ENCODE measurements at regions of chr20 and their contacts with region 1.

Region 1: GRCh38 chr20:46959081-46959692 is 64.5 kb downstream of the EYA2 start:
- DNase-seq: peak; percentile 99
- ATAC-seq: peak; percentile 86
- H3K4me3 ChIP-seq: no peak overlapping the region
- H3K27ac ChIP-seq: peak overlapping the region; percentile 52
- H3K4me1 ChIP-seq: peaks cover 18% of the 10 kb centered on the region
- H3K27me3 ChIP-seq: no peaks in the 10 kb centered on the region
- CTCF ChIP-seq: no peak
- POLR2A ChIP-seq: no peak
- RAD21 ChIP-seq: no peak; the same call in none of the 2 replicates

Region 2: DNA sequence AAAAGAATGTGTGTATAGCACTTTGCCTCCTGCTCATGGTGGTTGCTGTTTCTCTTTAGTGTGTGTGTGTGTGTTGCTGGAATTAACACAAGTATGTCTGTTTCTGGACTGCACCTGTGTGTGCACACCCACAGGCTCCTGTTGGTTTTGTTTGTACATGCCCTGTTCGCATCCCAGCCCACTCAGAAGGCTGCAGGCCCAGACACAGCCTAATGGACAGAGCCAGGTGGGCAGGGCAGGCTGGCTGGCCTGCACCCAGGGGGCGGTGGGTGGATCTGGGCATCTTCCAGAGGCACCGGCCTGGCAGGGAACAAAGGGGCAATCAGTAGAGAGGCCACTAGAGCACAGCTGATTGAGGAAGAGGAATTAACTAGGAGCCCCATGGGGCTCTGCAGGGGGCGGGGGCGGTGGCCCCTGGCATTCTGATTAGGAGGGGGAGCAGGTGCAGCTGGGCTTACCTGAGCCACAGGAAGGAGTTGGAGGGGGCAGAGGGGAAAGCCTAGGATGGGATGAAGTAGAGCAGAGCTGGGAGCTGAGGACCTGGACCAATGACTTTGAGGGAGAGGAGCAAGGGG is 819.2 kb before region 1 on chr20:
- CTCF ChIA-PET with region 1: no interaction called
- POLR2A ChIA-PET with region 1: no interaction called
- dilution Hi-C with region 1: no loop called
- in situ Hi-C with region 1: no loop called
- intact Hi-C with region 1: no loop called
- DNase-seq: no peak
- ATAC-seq: no peak
- H3K4me3 ChIP-seq: no peak overlapping the region
- H3K27ac ChIP-seq: no peak overlapping the region
- H3K4me1 ChIP-seq: no peaks in the 10 kb centered on the region
- H3K27me3 ChIP-seq: peaks cover 45% of the 10 kb centered on the region
- CTCF ChIP-seq: no peak
- POLR2A ChIP-seq: no peak
- RAD21 ChIP-seq: no peak

Region 3: DNA sequence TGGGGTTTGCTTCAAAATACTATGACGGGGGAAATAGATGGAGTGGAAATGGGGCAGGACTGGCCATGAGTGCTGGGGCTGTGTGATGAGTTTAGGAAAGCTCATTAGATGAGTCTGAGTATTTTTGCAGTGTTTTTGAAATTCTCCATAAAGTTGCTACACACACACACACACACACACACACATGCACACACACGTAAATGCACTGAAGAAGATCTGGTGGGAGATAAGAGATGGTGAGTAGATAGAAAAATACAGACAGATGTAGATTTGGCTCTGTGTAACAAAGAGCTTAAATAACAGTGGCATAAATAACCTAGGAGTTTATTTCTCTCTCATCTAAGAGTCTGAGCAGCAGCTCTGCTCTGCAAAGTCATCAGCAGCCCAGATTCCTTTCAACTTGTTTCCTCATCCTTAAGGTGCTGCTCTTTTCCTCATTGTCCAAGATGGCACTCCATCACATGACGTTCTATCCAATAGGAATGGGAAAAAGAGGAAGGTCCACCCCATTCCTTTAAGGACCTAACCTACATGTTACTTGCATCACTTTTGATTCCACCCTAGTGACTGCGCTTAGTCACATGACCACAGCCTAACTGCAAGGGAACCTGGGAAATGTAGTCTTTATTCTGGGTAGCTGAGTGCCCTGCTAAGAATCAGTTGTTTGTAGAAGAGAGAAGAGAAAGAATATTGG is 11.9 kb after region 1 on chr20:
- CTCF ChIA-PET with region 1: no interaction called
- POLR2A ChIA-PET with region 1: no interaction called
- dilution Hi-C with region 1: no loop called
- in situ Hi-C with region 1: no loop called
- intact Hi-C with region 1: loop called (anchors 1 kb)
- DNase-seq: peak; percentile 97
- ATAC-seq: peak; percentile 100
- H3K4me3 ChIP-seq: no peak overlapping the region
- H3K27ac ChIP-seq: no peak overlapping the region; the same call in 1 of the 2 replicates
- H3K4me1 ChIP-seq: no peaks in the 10 kb centered on the region
- H3K27me3 ChIP-seq: no peaks in the 10 kb centered on the region
- CTCF ChIP-seq: no peak
- POLR2A ChIP-seq: no peak
- RAD21 ChIP-seq: no peak

Region 4: DNA sequence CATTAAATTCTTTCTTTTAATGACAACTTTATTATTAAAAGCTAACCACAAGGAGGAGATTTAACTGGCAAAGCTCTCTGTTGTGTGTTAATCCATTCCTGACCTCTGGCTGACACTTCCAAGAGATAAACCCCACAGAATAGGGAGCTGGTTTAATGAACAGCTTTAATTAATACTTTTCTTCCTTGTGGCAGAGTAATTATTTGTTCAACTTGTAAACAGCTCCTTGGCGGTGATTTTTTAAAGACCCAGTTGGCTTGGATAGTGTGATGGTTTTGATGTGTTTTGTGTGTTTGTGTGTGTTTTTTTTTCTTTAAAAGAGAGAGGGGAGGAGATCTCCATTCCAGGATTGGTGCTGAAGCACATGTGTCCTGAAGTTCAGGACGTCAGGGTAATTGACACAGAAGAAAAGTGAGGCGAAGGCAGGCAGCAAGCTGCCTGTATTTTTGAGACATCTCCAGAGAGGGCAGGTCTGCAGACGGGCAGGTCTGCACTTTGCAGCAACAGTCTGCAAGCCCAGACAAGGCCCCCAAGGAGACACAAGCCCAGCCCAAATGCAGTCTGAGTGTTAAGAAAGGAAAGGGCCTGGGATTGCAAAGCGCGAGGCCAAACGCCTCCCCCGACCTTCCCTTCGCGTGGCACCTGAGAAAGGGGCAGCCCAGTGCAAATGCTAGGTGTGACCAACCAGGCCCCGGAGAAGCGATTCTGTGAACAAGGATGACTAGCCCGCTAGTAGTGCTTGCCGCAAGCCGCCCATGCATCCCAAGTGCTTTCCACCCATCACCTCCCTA is 166.6 kb after region 1 on chr20:
- CTCF ChIA-PET with region 1: no interaction called
- POLR2A ChIA-PET with region 1: no interaction called
- dilution Hi-C with region 1: no loop called
- in situ Hi-C with region 1: no loop called
- intact Hi-C with region 1: loop called (anchors 10 kb)
- DNase-seq: no peak
- ATAC-seq: no peak
- H3K4me3 ChIP-seq: no peak overlapping the region
- H3K27ac ChIP-seq: peak overlapping the region; percentile 32
- H3K4me1 ChIP-seq: peaks cover 19% of the 10 kb centered on the region
- H3K27me3 ChIP-seq: no peaks in the 10 kb centered on the region
- CTCF ChIP-seq: no peak
- POLR2A ChIP-seq: no peak
- RAD21 ChIP-seq: no peak

Measured in IMR-90 (cell line).